Breast epithelium (tissue), 4 donors: ENCODE measurements at regions of chr11 and their contacts with region 1.

Region 1: DNA sequence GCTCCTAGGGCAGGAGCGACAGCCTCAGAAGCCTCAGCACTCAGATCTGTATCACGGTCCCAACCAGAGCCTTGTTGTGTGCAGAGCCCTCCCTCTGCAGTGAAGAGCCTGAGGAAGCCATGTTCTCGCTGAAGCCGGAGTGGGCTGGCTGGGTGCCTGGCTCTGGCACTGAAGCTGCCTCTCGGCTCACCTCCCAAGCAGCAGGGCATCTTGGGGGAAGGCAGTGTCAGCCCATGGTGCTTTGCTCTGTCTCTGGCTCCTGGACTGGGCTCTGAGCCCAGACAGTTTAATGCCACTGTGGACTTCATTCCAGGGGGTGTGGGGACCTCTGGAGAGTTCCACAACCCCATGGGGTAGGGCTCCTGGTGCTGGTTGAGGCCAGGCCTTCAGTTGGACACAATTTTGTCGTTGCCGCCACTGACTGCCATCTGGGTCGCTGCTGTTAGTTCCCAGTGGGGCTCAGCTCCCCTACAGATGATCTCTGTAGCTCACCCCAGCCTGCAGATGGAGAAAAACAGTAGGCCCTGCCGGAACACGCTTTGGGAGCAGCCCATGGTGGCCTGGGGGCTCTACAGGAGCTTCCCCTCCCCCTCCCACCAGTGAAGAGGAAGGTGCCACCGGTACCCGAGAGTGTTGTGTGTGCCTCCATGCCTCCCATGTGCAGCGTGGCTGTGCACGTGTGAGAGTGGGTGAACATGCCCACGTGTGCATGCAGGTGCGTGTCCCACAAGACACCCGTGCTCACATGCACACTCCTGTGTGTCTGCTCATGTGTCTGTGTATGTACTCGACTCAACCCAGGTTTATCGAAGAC is 86.5 kb upstream of the B3GAT1 start:
- DNase-seq: peak; percentile 29 to 70
- H3K4me3 ChIP-seq: no peak overlapping the region
- H3K27ac ChIP-seq: peak overlapping the region in 1 of 2 donors; percentile 44
- H3K4me1 ChIP-seq: no peaks in the 10 kb centered on the region
- H3K27me3 ChIP-seq: no peaks in the 10 kb centered on the region
- CTCF ChIP-seq: no peak
- POLR2A ChIP-seq: no peak

Region 2: DNA sequence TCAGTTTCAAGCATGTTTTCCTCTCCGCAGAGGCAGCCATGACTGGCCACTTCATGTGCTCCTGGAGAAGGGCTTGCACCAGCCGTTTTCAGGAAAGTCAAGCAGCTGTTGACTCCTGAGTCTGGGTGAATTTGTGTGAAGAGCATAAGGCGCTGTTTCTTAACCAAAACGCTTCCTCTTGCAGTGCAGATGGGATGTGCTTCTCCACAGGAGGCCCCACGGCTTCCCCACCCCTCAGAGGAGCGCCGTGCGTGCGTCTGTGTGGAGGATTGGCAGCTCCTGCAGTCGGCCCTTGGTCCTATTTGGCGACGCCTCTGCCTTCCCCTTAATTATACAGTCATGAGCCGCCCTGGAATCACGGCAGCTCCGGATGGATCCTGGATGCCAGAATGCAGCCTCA is 32.4 kb before region 1 on chr11:
- intact Hi-C with region 1: loop called (anchors 1 kb)
- DNase-seq: peak in 1 of 2 donors; percentile 53
- H3K4me3 ChIP-seq: peak overlapping the region in 1 of 3 donors; percentile 12
- H3K27ac ChIP-seq: peak overlapping the region in 1 of 2 donors; percentile 52
- H3K4me1 ChIP-seq: no peaks in the 10 kb centered on the region
- H3K27me3 ChIP-seq: peaks cover 0 to 7% of the 10 kb centered on the region in 2 donors
- CTCF ChIP-seq: no peak
- POLR2A ChIP-seq: no peak

Region 3: DNA sequence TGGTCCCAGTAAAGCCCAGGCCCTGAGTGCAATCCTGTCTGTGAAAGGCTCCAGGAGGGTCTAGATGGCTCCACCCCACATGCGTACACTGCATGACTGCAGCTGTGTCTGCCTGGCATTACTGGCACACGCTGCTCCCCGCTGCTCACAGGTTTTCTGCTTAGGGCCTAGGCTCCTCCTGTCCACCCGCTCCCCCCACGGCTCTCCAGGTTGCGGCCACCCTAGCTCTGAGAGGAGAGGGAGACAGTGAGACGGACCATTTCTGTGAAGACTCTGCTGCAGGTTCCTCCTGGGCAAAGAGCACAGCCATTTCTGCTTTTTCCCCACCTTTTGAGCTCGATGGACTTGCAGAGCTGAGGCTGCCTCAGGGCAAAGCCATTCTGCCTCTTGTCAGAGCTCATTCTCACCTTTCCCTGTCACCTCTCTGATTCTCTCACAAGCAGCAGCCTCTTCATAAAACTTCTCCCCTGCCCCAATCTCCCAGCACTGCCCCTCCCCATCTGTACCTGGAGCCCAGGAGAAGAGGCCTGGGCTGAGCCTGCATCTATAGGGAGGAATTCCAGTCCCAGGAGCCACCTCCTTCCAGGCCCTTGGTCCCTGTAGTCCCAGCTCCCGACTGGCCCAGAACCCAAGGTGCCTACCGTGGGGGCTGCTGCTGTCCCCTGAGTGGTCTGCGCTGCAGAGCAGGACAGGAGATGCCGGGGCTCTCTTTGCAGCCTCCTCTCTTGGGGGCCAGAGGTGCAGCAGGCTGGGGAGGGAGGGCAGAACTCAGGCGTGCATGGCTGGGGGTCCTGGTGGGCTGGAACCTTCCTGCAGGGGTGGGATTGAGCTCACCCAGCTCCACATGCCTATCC is 347.2 kb after region 1 on chr11:
- intact Hi-C with region 1: no loop called
- DNase-seq: no peak
- H3K4me3 ChIP-seq: no peak overlapping the region
- H3K27ac ChIP-seq: no peak overlapping the region
- H3K4me1 ChIP-seq: no peaks in the 10 kb centered on the region
- H3K27me3 ChIP-seq: peaks cover 0 to 16% of the 10 kb centered on the region in 2 donors
- CTCF ChIP-seq: no peak
- POLR2A ChIP-seq: no peak